ENCODE measurements at regions of chr12 and their contacts with region 1.

Region 1: GRCh38 chr12:120432772-120433525 is 5.0 kb upstream of the COX6A1 start:
- DNase-seq: no peak
- H3K4me3 ChIP-seq: no peak overlapping the region
- H3K27ac ChIP-seq: no peak overlapping the region
- H3K4me1 ChIP-seq: no peaks in the 10 kb centered on the region
- H3K27me3 ChIP-seq: no peaks in the 10 kb centered on the region
- CTCF ChIP-seq: no peak
- EP300 ChIP-seq: no peak
- RAD21 ChIP-seq: no peak

Region 2: GRCh38 chr12:120339256-120339655 is 93.7 kb before region 1 on chr12:
- CTCF ChIA-PET with region 1: interaction called, 46 read pairs
- POLR2A ChIA-PET with region 1: no interaction called
- DNase-seq: no peak
- H3K4me3 ChIP-seq: no peak overlapping the region
- H3K27ac ChIP-seq: no peak overlapping the region
- H3K4me1 ChIP-seq: no peaks in the 10 kb centered on the region
- H3K27me3 ChIP-seq: no peaks in the 10 kb centered on the region
- CTCF ChIP-seq: no peak
- EP300 ChIP-seq: no peak
- RAD21 ChIP-seq: no peak

Region 3: DNA sequence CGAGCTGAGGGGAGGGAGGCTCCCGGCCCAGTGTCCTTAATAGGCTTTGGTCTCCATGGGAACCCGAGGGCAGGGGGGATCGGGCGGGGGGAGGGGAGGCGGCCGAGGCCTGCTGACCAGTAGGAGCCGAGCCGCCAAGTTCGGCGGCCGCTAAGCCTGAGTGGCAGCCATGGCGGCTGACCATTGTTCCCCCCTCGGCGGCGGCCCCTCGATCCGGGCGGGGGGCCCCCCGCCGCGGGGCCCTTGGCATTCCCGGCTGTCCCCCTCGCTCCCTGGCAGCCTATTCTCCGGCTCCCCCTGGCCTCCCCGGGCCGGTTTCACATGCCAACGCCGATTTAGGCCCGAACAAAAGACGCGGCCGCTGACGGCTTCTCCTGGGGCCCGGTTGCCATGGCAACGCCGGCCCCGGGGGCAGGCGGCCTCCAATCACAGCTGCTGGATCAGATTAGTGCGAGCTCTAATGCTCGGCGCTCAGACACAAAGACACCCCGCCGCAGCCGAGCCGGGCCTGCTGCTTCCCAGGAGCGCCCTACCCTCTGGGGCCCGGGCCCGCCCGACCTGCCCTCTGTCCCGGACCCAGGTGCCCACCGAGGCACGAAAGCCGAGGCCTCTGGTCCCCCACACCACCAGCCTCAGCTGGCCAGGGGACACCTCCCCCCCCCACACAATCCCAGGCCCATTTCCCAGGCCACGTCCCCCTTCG is 71.3 kb before region 1 on chr12:
- CTCF ChIA-PET with region 1: interaction called, 95 read pairs
- POLR2A ChIA-PET with region 1: interaction called, 5 read pairs
- DNase-seq: peak; percentile 98
- H3K4me3 ChIP-seq: peak overlapping the region in 1 of 2 experiments; percentile 24; a peak in 2 of 4 replicates
- H3K27ac ChIP-seq: peak overlapping the region in 1 of 2 experiments; percentile 81; a peak in 2 of 4 replicates
- H3K4me1 ChIP-seq: peaks cover 0 to 34% of the 10 kb centered on the region in 2 experiments; a peak in 1 of 4 replicates
- H3K27me3 ChIP-seq: peaks cover 4% of the 10 kb centered on the region
- CTCF ChIP-seq: no peak
- EP300 ChIP-seq: no peak
- RAD21 ChIP-seq: no peak

Region 4: DNA sequence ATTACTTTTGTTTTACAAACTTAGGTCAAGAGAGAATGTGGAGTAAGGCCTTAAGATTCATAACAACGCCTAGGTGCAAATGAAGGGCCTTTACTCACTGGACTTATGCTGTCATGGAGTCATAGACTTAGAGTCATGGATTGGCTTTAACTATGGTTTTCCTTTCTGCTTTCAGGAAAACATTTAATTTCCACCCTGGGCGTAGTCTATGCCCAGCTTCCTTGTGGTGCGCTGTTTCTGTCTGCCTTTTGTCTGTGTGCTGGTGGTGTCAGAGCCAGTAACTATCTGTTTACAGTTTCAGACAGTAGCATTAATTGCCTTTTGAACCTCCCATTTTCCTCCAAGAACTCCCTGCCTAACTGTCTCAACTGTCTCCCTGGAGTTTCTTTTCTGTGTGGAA is 26.9 kb before region 1 on chr12:
- CTCF ChIA-PET with region 1: interaction called, 14 read pairs
- POLR2A ChIA-PET with region 1: no interaction called
- DNase-seq: no peak
- H3K4me3 ChIP-seq: no peak overlapping the region
- H3K27ac ChIP-seq: no peak overlapping the region
- H3K4me1 ChIP-seq: no peaks in the 10 kb centered on the region; a peak in 1 of 4 replicates
- H3K27me3 ChIP-seq: no peaks in the 10 kb centered on the region
- CTCF ChIP-seq: no peak
- EP300 ChIP-seq: no peak
- RAD21 ChIP-seq: no peak